ENCODE measurements at regions of chr17 and their contacts with region 1.

Region 1: GRCh38 chr17:72725433-72726068 is 366.9 kb downstream of the SLC39A11 start:
- DNase-seq: peak; percentile 71
- H3K4me3 Mint-ChIP-seq: no peak overlapping the region
- H3K27ac Mint-ChIP-seq: no peak overlapping the region
- H3K4me1 Mint-ChIP-seq: peaks cover 39% of the 10 kb centered on the region
- H3K27me3 Mint-ChIP-seq: no peaks in the 10 kb centered on the region

Region 2: DNA sequence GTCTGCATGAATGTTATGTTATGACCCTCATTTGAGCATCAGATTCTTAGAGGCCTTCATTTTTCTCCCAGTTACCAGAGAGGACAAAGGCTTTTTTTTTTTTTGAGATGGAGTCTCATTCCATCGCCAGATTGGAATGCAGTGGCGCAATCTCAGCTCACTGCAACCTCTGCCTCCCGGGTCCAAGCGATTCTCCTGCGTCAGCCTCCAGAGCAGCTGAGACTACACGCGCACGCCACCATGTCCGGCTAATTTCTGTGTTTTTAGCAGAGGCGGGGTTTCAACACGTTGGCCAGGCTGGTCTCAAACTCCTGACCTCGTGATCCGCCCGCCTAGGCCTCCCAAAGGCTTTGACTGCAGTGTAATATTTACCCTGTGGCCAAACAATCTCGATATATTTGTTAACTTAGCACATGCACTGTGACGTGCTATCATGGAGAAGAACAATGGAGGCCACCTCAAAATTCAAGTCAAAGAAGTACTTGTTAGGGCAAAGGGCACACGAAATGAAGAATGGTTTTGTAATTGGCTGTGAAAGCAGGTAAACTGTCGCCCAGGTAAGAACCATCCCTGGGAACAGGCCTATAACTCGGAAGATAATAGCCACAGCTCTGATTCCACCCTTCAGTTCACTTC is 63.5 kb after region 1 on chr17:
- CTCF ChIA-PET with region 1: no interaction called
- POLR2A ChIA-PET with region 1: no interaction called
- intact Hi-C with region 1: no loop called
- DNase-seq: no peak
- H3K4me3 Mint-ChIP-seq: no peak overlapping the region
- H3K27ac Mint-ChIP-seq: no peak overlapping the region
- H3K4me1 Mint-ChIP-seq: no peaks in the 10 kb centered on the region
- H3K27me3 Mint-ChIP-seq: no peaks in the 10 kb centered on the region

Region 3: GRCh38 chr17:72863526-72864211 is 138.1 kb after region 1 on chr17:
- CTCF ChIA-PET with region 1: interaction called, 3 read pairs
- POLR2A ChIA-PET with region 1: no interaction called
- intact Hi-C with region 1: loop called (anchors 5 kb)
- DNase-seq: no peak
- H3K4me3 Mint-ChIP-seq: no peak overlapping the region
- H3K27ac Mint-ChIP-seq: peak overlapping the region; percentile 60
- H3K4me1 Mint-ChIP-seq: peaks cover 38% of the 10 kb centered on the region
- H3K27me3 Mint-ChIP-seq: no peaks in the 10 kb centered on the region

Region 4: DNA sequence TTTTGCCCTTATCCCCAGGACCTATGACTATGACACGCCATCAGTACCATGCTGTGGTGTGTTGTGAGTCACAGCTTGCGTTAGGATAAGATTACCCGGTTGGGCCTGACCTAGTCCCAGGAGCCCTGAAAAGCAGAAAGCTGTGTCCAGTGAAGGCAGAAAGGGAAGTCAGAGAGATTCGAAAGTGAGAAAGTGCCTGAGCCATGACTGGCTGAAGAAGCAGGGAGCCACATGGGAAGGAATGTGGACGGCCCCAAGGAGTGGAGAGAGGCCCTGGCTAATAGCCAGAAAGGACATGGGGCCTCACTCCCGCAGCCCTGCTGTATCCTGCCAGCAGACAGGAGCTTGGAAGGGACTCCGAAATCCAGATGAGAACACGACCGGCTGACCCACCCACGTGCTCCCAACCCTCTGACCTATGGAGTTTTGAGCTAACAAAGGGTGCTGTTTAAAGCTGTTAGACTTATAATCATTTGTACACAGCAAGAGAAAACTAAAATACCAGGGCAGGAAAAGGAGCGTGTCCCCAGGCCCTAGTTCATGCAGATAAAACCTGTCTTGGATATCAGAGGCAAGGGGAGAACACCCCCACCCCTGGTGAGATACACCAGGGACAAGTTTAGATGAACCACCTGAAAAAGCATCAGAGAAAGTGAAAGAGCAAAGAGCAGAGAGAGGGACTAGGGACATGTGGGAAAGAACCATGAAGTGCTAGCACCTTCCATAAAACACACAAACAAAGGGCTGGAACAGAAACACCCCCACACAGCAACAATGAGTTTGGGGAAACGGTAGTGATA is 251.6 kb after region 1 on chr17:
- CTCF ChIA-PET with region 1: no interaction called
- POLR2A ChIA-PET with region 1: no interaction called
- intact Hi-C with region 1: no loop called
- DNase-seq: no peak
- H3K4me3 Mint-ChIP-seq: no peak overlapping the region
- H3K27ac Mint-ChIP-seq: no peak overlapping the region
- H3K4me1 Mint-ChIP-seq: peaks cover 5% of the 10 kb centered on the region
- H3K27me3 Mint-ChIP-seq: no peaks in the 10 kb centered on the region

Region 5: DNA sequence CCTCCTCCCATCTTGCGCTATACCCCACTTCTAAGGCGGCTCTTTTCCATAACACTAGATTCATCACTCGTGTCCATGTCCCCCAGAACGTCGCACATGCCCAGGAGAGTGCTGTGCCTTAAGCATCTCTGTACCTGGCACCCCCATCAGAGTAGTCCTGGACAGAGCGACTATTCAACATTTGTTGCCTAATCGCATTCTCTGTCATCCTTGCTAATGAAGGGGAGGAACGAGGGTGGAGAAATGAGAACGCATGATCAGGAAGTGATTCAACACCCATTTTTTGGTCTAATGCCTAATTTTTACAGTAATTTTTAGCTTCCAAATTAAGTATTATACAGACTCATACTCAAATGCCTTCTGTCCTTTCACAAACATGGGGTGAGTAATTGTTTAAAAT is 313.7 kb after region 1 on chr17:
- CTCF ChIA-PET with region 1: no interaction called
- POLR2A ChIA-PET with region 1: no interaction called
- intact Hi-C with region 1: no loop called
- DNase-seq: no peak
- H3K4me3 Mint-ChIP-seq: no peak overlapping the region
- H3K27ac Mint-ChIP-seq: no peak overlapping the region
- H3K4me1 Mint-ChIP-seq: peaks cover 4% of the 10 kb centered on the region
- H3K27me3 Mint-ChIP-seq: no peaks in the 10 kb centered on the region

Region 6: DNA sequence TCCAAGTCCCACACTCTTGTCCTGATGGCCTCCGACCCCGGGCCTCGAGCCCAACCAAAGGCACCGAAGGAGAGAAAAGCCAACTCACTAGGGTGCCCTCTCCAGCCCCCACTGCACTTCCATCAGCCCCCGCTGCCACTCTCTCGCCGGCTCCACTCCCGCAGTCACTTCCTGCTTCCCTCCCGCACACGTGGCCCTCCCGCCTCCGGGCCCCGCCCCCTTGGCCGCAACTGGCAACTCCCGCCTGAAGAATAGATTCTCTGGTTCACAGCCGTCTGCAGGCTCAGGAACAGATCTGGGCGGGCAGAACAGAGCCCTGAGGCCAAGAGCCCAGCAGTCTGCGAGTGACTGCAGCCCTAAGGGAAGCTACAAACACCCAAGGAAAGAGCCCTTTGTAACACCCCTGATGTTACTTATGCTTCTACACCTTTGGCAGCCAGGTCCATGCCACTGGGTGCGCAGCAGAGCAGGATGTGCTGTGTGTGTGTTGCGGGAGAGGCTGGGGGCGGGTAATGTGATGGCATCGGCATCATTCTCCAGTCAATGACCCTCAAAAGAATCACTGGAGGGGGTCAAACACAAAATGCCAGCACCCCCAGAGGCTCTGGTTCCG is 367.1 kb after region 1 on chr17 and contains the start of gene SLC39A11:
- CTCF ChIA-PET with region 1: interaction called, 7 read pairs
- POLR2A ChIA-PET with region 1: no interaction called
- intact Hi-C with region 1: loop called (anchors 5 kb)
- DNase-seq: peak; percentile 94
- H3K4me3 Mint-ChIP-seq: peak within 1 kb of the TSS; percentile 97
- H3K27ac Mint-ChIP-seq: peak within 1 kb of the TSS; percentile 83
- H3K4me1 Mint-ChIP-seq: peaks cover 27% of the 10 kb centered on the region
- H3K27me3 Mint-ChIP-seq: no peaks in the 10 kb centered on the region
- total RNA-seq, gene SLC39A11: 14.9 to 15.2 TPM

Region 7: GRCh38 chr17:73192894-73193701 is 467.5 kb after region 1 on chr17 and contains the start of gene COG1:
- CTCF ChIA-PET with region 1: interaction called, 28 read pairs
- POLR2A ChIA-PET with region 1: interaction called, 8 read pairs
- intact Hi-C with region 1: loop called (anchors 1 kb)
- DNase-seq: peak; percentile 92
- H3K4me3 Mint-ChIP-seq: peak within 1 kb of the TSS; percentile 95
- H3K27ac Mint-ChIP-seq: peak within 1 kb of the TSS; percentile 92
- H3K4me1 Mint-ChIP-seq: peaks cover 25% of the 10 kb centered on the region
- H3K27me3 Mint-ChIP-seq: no peaks in the 10 kb centered on the region
- total RNA-seq, gene COG1: 29.8 to 30.6 TPM

Region 8: DNA sequence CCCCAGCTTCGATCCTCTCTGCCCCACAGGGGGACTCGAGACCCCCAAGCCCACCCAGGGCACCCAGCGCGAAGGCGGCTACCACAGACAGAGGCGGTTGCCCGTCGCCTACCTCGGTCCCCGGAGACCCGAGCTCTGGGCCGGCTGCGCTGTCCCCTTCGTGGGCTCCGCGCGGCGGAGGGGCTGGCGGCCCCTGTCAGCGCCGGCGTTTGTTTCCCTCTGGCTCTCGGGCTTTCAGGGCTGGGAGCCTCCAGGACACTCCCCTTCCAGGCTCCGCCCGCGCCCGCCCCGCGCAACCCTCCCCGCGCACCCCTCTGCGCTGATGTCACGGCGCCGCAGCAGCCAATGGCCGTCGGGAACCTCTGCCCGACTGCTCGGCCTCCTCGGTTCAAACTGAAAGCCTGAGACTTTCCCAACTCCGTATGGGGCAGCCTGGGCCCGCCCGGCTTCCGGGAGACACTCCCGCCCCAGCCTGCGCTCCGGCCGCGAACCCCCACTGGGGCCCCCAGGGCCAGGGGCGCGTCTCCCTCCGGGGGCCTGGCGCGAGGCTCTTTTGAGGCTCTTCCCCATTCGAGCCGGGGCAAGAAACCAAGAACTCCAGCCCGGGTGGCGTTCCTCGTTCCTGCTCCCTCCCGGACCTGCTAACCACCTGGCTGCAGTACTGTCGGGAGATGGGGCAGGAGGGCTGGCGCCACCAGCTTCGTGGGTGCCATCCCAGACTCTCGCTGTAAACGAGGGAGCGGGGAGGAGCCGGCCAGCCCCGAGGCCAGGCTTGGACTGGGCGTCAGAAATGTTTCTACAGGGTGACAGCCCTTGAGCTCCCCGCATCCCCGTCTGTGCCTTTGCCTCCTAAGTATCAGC is 586.5 kb after region 1 on chr17 and contains the start of gene CDC42EP4:
- CTCF ChIA-PET with region 1: interaction called, 13 read pairs
- POLR2A ChIA-PET with region 1: interaction called, 3 read pairs
- intact Hi-C with region 1: loop called (anchors 1 kb)
- DNase-seq: peak; percentile 94
- H3K4me3 Mint-ChIP-seq: peak within 1 kb of the TSS; percentile 81
- H3K27ac Mint-ChIP-seq: no peak within 1 kb of the TSS
- H3K4me1 Mint-ChIP-seq: peaks cover 14% of the 10 kb centered on the region
- H3K27me3 Mint-ChIP-seq: no peaks in the 10 kb centered on the region
- total RNA-seq, gene CDC42EP4: 1.6 to 1.7 TPM